ENCODE measurements at regions of chr1 and their contacts with region 1.

Region 1: GRCh38 chr1:66253330-66253921 is 280.5 kb upstream of the SGIP1 start:
- DNase-seq: peak; percentile 41
- H3K4me3 ChIP-seq: no peak overlapping the region
- H3K27ac ChIP-seq: no peak overlapping the region
- H3K4me1 ChIP-seq: no peaks in the 10 kb centered on the region
- H3K27me3 ChIP-seq: no peaks in the 10 kb centered on the region
- CTCF ChIP-seq: peak; percentile 37 to 87 (median 72)
- POLR2A ChIP-seq: no peak

Region 2: GRCh38 chr1:66446261-66447001 is 193.0 kb after region 1 on chr1:
- intact Hi-C with region 1: loop called (anchors 2 kb)
- DNase-seq: peak; percentile 26
- H3K4me3 ChIP-seq: no peak overlapping the region
- H3K27ac ChIP-seq: no peak overlapping the region
- H3K4me1 ChIP-seq: no peaks in the 10 kb centered on the region
- H3K27me3 ChIP-seq: no peaks in the 10 kb centered on the region
- CTCF ChIP-seq: peak; percentile 74 to 92 (median 90)
- POLR2A ChIP-seq: no peak